B cell (primary cell): ENCODE measurements at regions of chr9 and their contacts with region 1.

Region 1: GRCh38 chr9:114366334-114367128 is 21.3 kb downstream of the AKNA start:
- DNase-seq: peak; percentile 74
- ATAC-seq: peak; percentile 50
- H3K4me3 ChIP-seq: peak overlapping the region in 3 of 5 experiments; percentile 9 to 45 (median 23)
- H3K4me3 Mint-ChIP-seq: peak overlapping the region; percentile 71
- H3K27ac ChIP-seq: peak overlapping the region; percentile 80
- H3K27ac Mint-ChIP-seq: peak overlapping the region; percentile 90
- H3K4me1 ChIP-seq: peaks cover 88 to 99% of the 10 kb centered on the region in 2 donors
- H3K4me1 Mint-ChIP-seq: peaks cover 84% of the 10 kb centered on the region
- H3K27me3 ChIP-seq: no peaks in the 10 kb centered on the region
- H3K27me3 Mint-ChIP-seq: no peaks in the 10 kb centered on the region
- CTCF ChIP-seq: no peak

Region 2: DNA sequence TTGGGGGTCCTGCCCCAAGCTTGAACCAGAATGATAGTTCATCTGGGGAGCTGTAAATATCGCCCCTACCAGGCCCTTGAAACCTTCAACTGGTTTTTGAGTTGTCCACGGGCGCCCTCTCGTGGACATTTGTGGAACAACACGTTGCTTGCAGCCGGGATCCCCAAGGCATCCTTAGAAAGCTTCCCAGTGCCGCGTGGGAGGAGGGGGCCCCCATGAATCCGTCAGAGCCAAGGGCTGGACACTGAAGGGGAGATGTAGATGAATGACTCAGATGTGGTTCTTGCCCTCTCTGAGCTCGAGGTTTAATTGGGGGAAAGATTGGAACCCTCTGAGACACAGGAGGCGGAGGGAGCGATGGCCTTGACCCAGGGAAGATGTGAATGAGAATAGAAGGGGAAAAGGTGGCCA is 75.5 kb before region 1 on chr9:
- CTCF ChIA-PET with region 1: no interaction called
- POLR2A ChIA-PET with region 1: no interaction called
- intact Hi-C with region 1: no loop called
- DNase-seq: peak; percentile 70
- ATAC-seq: no peak
- H3K4me3 ChIP-seq: no peak overlapping the region
- H3K4me3 Mint-ChIP-seq: no peak overlapping the region
- H3K27ac ChIP-seq: no peak overlapping the region
- H3K27ac Mint-ChIP-seq: no peak overlapping the region
- H3K4me1 ChIP-seq: peaks cover 0 to 3% of the 10 kb centered on the region in 2 donors
- H3K4me1 Mint-ChIP-seq: no peaks in the 10 kb centered on the region
- H3K27me3 ChIP-seq: peaks cover 0 to 6% (median 2%) of the 10 kb centered on the region in 4 experiments
- H3K27me3 Mint-ChIP-seq: peaks cover 5% of the 10 kb centered on the region
- CTCF ChIP-seq: peak; percentile 94

Region 3: GRCh38 chr9:114348906-114349482 is 17.5 kb before region 1 on chr9:
- CTCF ChIA-PET with region 1: interaction called, 7 read pairs
- POLR2A ChIA-PET with region 1: interaction called, 6 read pairs
- intact Hi-C with region 1: loop called (anchors 1 kb)
- DNase-seq: peak; percentile 91
- ATAC-seq: peak; percentile 94
- H3K4me3 ChIP-seq: no peak overlapping the region
- H3K4me3 Mint-ChIP-seq: peak overlapping the region; percentile 83
- H3K27ac ChIP-seq: peak overlapping the region; percentile 68 to 80
- H3K27ac Mint-ChIP-seq: peak overlapping the region; percentile 97
- H3K4me1 ChIP-seq: peaks cover 26 to 36% of the 10 kb centered on the region in 2 donors
- H3K4me1 Mint-ChIP-seq: peaks cover 44% of the 10 kb centered on the region
- H3K27me3 ChIP-seq: no peaks in the 10 kb centered on the region
- H3K27me3 Mint-ChIP-seq: no peaks in the 10 kb centered on the region
- CTCF ChIP-seq: no peak